Naive thymus-derived CD4-positive, alpha-beta T cell (primary cell): ENCODE measurements at regions of chr1 and their contacts with region 1.

Region 1: DNA sequence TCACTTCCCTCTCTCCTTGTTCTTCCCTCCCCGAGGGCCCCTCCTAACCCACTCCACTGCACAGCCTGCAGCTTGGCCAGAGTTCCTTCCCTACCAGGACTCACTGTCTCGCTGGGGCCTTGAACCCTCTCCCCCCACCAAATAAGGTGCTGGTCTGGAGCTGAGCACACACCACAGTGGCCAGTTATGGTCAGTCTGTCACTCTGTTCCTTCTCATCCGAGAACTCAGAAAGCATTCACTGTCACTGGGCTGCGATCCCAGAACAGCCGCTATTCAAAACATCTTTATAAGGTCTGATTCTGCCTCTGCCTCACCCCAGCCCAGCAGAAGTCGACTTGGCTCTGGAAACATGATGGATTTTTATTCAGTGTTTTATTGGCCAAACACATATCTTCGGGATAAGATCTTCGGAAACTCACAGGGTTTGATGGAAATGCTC is 19.8 kb upstream of the LBR start:
- DNase-seq: no peak
- ATAC-seq: no peak
- H3K4me3 ChIP-seq: no peak overlapping the region
- H3K4me3 Mint-ChIP-seq: peak overlapping the region in 2 of 10 donors; percentile 16 to 56
- H3K27ac ChIP-seq: no peak overlapping the region
- H3K27ac Mint-ChIP-seq: peak overlapping the region in 8 of 9 donors; percentile 21 to 94 (median 55)
- H3K4me1 ChIP-seq: peaks cover 21 to 37% of the 10 kb centered on the region in 2 donors
- H3K4me1 Mint-ChIP-seq: peaks cover 51 to 72% (median 62%) of the 10 kb centered on the region in 7 donors
- H3K27me3 ChIP-seq: no peaks in the 10 kb centered on the region
- H3K27me3 Mint-ChIP-seq: peaks cover 0 to 2% (median 0%) of the 10 kb centered on the region in 5 donors

Region 2: DNA sequence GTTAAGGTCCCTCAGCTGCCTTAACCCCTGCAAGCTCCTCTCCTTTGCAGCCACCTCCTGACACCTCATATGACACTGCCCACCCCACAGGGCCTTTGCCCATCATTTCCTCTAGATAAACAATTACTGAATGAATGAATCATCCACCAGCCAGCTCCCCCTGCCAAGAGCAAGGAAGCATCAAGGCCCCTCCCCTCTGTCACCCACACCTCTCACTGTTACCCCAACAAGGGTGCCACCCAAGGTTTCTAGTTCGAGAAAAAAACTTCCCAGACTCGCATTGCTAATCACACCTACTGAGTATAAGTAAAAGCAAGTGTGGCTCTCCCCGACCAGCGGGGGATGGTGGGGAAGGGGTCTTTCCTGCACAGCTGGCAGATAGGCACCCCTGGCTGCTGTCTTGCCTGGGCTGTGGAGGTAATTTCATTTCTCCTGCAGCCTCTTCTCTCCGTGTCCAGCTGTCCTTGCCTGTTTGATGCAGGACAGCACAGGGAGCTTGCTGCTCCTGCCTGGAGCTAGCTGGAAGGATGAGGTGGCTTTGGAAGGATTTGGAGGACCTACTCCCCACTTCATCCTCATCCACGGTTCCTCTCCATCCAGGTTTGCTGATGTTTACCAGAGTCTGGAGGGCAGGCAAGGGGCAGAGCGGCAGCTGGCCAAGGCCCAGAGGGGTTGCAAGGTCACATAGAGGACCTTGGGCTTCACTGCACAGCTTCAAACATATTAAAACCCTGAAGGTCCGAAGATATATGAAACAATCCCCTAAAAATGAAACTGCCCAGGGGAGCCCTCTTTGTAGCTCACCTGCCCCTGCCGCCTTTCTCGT is 13.3 kb after region 1 on chr1:
- CTCF ChIA-PET with region 1: no interaction called
- POLR2A ChIA-PET with region 1: interaction called, 17 read pairs
- intact Hi-C with region 1: no loop called
- DNase-seq: peak in 1 of 9 donors; percentile 44
- ATAC-seq: peak; percentile 87
- H3K4me3 ChIP-seq: peak overlapping the region; percentile 20
- H3K4me3 Mint-ChIP-seq: peak overlapping the region in 2 of 10 donors; percentile 43 to 57
- H3K27ac ChIP-seq: no peak overlapping the region
- H3K27ac Mint-ChIP-seq: peak overlapping the region in 5 of 9 donors; percentile 27 to 86 (median 49)
- H3K4me1 ChIP-seq: peaks cover 11 to 39% of the 10 kb centered on the region in 2 donors
- H3K4me1 Mint-ChIP-seq: peaks cover 20 to 57% (median 38%) of the 10 kb centered on the region in 7 donors
- H3K27me3 ChIP-seq: no peaks in the 10 kb centered on the region
- H3K27me3 Mint-ChIP-seq: peaks cover 0 to 3% (median 0%) of the 10 kb centered on the region in 5 donors

Region 3: DNA sequence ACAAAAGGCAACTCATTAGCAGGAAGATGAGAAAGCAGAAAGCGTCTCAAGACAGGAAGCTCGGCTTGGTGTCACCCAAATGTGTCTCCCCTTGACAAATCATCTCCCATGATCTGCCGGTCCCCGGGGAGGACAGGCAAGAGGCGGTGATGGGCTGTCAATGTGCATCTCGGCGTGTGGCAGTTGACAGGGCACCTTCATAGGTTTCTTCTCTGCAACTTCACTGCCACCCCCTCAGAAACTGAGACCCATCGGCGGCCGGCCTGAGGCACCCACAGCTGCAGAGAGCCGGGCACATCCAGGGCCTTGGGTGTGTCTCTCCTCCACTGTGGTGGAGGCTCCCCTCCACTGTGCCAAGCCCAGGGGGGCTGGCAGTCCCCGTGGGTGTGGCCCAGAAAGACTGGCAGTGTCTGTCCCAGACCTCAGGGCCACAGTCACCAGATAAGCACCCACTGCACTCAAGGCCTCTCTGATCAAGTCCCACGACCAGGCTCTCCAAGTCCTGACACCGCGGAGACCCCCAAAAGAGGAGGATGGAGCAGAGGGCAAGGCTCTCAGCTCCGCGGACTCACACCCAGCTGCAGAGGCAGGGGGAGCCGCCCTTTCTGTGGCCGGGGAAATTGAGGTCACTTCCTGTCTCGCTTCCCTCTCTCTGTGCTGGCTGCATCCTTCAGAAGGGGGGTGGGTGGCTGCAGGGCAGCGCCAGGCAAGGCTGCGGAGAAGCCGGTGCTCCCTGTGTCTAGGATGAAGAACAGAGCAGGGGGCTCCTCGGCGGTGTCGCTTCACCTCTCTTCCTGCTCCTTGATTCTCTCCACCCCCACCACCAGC is 19.7 kb after region 1 on chr1:
- CTCF ChIA-PET with region 1: interaction called, 14 read pairs
- POLR2A ChIA-PET with region 1: interaction called, 131 read pairs
- intact Hi-C with region 1: loop called (anchors 1 kb)
- DNase-seq: peak; percentile 57 to 85 (median 81)
- ATAC-seq: peak; percentile 91
- H3K4me3 ChIP-seq: peak overlapping the region; percentile 94
- H3K4me3 Mint-ChIP-seq: peak overlapping the region; percentile 81 to 94 (median 92)
- H3K27ac ChIP-seq: peak overlapping the region; percentile 85
- H3K27ac Mint-ChIP-seq: peak overlapping the region; percentile 89 to 98 (median 98)
- H3K4me1 ChIP-seq: peaks cover 22 to 40% of the 10 kb centered on the region in 2 donors
- H3K4me1 Mint-ChIP-seq: peaks cover 33 to 65% (median 48%) of the 10 kb centered on the region in 7 donors
- H3K27me3 ChIP-seq: no peaks in the 10 kb centered on the region
- H3K27me3 Mint-ChIP-seq: no peaks in the 10 kb centered on the region

Region 4: DNA sequence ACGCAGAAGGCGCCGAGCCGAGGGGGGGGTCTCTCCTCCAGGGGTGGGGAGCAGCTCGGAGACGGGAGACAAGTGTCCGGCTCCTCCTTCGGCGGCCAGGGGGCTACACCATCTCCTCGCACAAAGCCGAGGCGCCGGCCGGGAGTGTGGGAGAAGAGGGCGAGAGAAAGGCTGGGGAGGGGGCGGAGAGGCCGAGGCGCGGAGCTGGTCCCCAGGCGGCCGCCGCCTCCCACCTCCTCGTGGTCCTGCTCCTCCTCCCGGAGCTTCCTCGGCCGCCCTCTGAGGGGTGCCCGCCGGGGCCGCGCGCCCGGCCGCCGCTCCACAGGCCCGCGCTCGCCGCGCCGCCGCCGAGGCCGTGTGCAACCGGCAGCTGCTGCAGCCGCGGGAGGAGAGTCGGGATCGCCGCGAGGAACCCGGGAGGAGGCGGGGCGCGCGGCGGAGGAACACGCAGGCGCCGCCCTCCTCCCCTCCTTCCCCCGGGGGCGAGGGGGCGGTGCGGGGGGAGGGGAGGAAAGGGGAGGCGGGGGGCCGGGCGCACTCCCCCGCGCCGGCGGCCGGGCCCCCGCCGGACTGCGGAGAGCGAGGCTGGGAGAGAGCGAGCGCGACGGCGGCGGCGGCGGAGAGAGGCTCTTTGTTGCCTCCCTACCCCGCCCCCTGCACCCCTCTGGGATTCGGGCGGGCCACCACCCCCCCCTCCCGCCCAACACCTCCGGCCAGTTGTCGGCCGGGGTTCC is 205.2 kb after region 1 on chr1 and contains the start of gene ENAH:
- CTCF ChIA-PET with region 1: no interaction called
- POLR2A ChIA-PET with region 1: no interaction called
- intact Hi-C with region 1: loop called in 1 of 2 experiments (anchors 1 kb)
- DNase-seq: peak in 7 of 9 donors; percentile 12 to 49 (median 21)
- ATAC-seq: peak; percentile 72
- H3K4me3 ChIP-seq: peak within 1 kb of the TSS; percentile 58
- H3K4me3 Mint-ChIP-seq: peak within 1 kb of the TSS; percentile 79 to 95 (median 88)
- H3K27ac ChIP-seq: no peak within 1 kb of the TSS
- H3K27ac Mint-ChIP-seq: peak within 1 kb of the TSS in 4 of 9 donors; percentile 16 to 78 (median 70)
- H3K4me1 ChIP-seq: peaks cover 5 to 12% of the 10 kb centered on the region in 2 donors
- H3K4me1 Mint-ChIP-seq: peaks cover 9 to 19% (median 16%) of the 10 kb centered on the region in 7 donors
- H3K27me3 ChIP-seq: peaks cover 0 to 12% of the 10 kb centered on the region in 2 donors
- H3K27me3 Mint-ChIP-seq: peaks cover 30 to 71% (median 40%) of the 10 kb centered on the region in 5 donors
- total RNA-seq, gene ENAH: 0.08 to 0.42 (median 0.16) TPM in 3 of 5 experiments, not detected in the others